ENCODE measurements at regions of chr7 and their contacts with region 1.

Region 1: GRCh38 chr7:140517546-140518369 is 38.5 kb upstream of the MKRN1 start:
- DNase-seq: peak; percentile 94
- ATAC-seq: peak; percentile 94

Region 2: DNA sequence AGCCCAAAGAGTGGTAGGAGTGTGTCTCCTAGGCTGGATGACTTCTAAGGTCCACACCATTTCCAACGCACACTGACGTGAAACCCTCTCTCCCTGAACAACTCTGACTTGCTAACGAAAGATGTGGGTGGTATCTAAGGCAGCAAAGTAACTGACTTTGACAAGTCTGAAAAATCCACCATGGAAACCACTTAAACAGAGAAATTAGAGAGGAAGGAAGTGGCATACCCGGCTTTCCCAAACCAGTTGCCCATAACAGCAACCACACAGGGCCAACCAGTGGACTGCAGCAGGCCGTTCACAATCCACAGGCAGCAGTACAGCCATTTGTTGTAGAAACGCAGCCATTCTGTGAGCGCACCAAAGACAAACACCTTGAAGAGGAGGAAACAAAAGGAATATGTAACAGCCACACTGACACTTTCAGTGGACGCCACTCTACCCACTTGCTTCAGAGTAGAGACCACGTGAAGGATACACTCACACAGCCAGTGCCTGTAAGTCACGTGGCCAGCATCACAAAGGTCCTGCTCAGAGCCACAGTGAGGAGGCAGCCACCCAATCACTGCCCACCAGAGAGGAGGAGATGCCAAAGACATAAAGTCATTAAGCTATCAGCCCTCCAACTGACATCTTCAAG is 159.2 kb before region 1 on chr7:
- intact Hi-C with region 1: no loop called
- DNase-seq: no peak
- ATAC-seq: no peak

Region 3: DNA sequence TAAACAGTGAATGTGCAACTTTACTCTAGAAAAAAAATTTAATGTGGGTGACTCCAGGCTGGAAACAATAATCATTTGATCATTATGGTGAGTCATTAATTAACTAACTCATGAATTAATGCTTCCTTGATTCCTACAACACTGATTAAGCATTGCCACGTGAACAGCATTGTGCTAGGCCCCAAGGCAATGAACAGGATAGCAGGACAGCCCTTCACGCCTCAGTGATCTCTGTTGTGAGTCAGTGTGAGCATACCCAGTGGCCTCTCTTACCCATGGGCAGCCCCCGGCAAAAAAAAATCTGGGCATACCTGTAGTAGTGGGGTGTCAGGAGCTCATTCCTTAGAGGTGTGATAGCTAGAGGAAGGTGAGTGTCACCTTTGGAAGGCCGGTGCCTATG is 46.9 kb after region 1 on chr7:
- intact Hi-C with region 1: loop called (anchors 5 kb)
- DNase-seq: no peak
- ATAC-seq: no peak